Right ventricle myocardium inferior (tissue), 1 donor: ENCODE measurements at regions of chr17 and their contacts with region 1.

Region 1: DNA sequence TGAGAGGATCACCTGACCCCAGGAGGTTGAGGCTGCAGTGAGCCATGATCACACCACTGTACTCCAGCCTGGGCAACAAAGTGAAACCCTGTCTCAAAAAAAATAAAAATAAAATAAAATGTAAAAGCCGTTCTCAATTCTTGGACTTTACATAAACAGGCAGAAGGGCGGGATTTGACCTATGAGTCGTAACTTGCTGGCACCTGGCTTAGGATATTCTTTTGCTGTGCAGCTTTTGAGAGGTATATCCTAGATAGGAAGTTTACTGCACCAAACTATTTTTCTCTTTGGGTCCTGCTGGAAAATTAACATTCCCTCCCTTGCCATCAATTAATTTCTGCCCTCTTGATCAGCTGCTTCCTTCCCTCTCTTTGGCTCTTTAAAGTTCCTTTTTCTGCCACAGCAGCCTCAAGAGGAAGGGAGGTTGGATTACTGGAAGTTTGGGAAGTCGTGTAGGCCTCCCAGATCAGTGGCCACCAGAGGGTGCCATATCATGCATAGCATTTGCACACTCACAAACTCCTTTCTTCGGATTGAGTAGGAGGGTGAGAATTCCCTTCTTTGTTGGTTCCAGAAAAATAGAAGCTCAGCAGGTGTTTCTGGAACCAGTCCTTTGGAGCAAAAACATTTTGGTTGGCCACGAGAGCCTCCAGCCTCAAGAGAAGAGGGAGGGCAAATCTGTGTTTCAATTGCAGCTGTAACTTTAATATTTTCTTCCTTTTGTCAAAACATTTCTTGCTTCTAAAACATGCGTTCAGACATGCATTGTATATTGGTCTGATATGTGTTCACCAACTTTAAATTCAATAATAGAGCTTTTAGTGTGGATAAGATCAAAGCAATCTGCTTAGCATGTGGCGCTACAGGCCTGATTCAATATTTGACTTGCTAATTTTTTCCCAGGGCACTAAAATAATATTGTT is 147.3 kb downstream of the CCDC182 start:
- DNase-seq: peak; percentile 72
- ATAC-seq: peak; percentile 74

Region 2: GRCh38 chr17:57255776-57256681 is 341.8 kb before region 1 on chr17 and contains the start of gene MSI2:
- intact Hi-C with region 1: loop called (anchors 2 kb)
- DNase-seq: peak; percentile 97
- ATAC-seq: peak; percentile 91
- total RNA-seq, gene MSI2: 96.8 TPM

Region 3: GRCh38 chr17:57671667-57672632 is 74.2 kb after region 1 on chr17:
- intact Hi-C with region 1: loop called (anchors 1 kb)
- DNase-seq: peak; percentile 88
- ATAC-seq: peak; percentile 94

Region 4: GRCh38 chr17:57747221-57748017 is 149.6 kb after region 1 on chr17:
- intact Hi-C with region 1: loop called (anchors 5 kb)
- DNase-seq: no peak
- ATAC-seq: no peak